Right ventricle myocardium inferior (tissue), 1 donor: ENCODE measurements at regions of chr6 and their contacts with region 1.

Region 1: GRCh38 chr6:134943522-134944111 is 6.3 kb downstream of the ALDH8A1 start:
- DNase-seq: no peak
- ATAC-seq: no peak

Region 2: DNA sequence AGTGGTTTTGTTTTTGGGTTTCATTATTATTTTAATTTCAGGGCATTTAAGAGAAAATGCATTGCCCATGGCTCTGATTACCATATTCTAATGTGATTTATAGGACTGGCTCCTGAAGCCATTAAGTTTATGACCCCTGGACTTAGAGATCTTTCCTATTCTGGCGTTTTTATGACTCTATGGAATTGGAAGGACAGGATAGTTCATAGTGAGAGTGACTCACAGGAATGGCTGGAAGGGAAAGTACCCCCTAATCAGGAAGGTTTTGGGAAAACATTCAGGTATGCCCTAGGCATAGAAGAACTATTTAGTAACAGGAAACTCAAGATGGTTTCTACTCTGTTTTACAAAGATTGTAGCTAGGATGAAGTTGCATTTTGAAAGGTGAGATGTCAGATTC is 782.6 kb before region 1 on chr6:
- intact Hi-C with region 1: loop called (anchors 5 kb)
- DNase-seq: no peak
- ATAC-seq: no peak